ENCODE measurements at regions of chr2 and their contacts with region 1.

Region 1: GRCh38 chr2:71068218-71069035 is at the start of gene NAGK:
- DNase-seq: peak; percentile 97 to 99
- ATAC-seq: peak; percentile 96 to 97 (median 97)
- H3K4me3 ChIP-seq: peak within 1 kb of the TSS; percentile 78
- H3K27ac ChIP-seq: peak within 1 kb of the TSS; percentile 95
- H3K4me1 ChIP-seq: peaks cover 21% of the 10 kb centered on the region
- H3K27me3 ChIP-seq: no peaks in the 10 kb centered on the region
- CTCF ChIP-seq: no peak
- total RNA-seq, gene NAGK: 31.3 to 49.1 (median 37.0) TPM

Region 2: GRCh38 chr2:69625078-69625795 is 1443.2 kb before region 1 on chr2:
- intact Hi-C with region 1: no loop called
- DNase-seq: no peak
- ATAC-seq: peak in 3 of 4 donors; percentile 42 to 74 (median 70)
- H3K4me3 ChIP-seq: peak overlapping the region; percentile 1
- H3K27ac ChIP-seq: peak overlapping the region; percentile 11
- H3K4me1 ChIP-seq: peaks cover 38% of the 10 kb centered on the region
- H3K27me3 ChIP-seq: no peaks in the 10 kb centered on the region
- CTCF ChIP-seq: no peak

Region 3: GRCh38 chr2:71130113-71130904 is 61.9 kb after region 1 on chr2 and contains the starts of genes MCEE and MPHOSPH10:
- intact Hi-C with region 1: loop called (anchors 5 kb)
- DNase-seq: peak; percentile 90 to 95
- ATAC-seq: peak; percentile 95 to 97 (median 96)
- H3K4me3 ChIP-seq: peak within 1 kb of the TSS; percentile 95
- H3K27ac ChIP-seq: peak within 1 kb of the TSS; percentile 93
- H3K4me1 ChIP-seq: peaks cover 28% of the 10 kb centered on the region
- H3K27me3 ChIP-seq: no peaks in the 10 kb centered on the region
- CTCF ChIP-seq: no peak
- total RNA-seq, gene MCEE: 15.3 to 17.2 (median 15.9) TPM
- total RNA-seq, gene MPHOSPH10: 32.9 to 53.7 (median 39.5) TPM

Region 4: DNA sequence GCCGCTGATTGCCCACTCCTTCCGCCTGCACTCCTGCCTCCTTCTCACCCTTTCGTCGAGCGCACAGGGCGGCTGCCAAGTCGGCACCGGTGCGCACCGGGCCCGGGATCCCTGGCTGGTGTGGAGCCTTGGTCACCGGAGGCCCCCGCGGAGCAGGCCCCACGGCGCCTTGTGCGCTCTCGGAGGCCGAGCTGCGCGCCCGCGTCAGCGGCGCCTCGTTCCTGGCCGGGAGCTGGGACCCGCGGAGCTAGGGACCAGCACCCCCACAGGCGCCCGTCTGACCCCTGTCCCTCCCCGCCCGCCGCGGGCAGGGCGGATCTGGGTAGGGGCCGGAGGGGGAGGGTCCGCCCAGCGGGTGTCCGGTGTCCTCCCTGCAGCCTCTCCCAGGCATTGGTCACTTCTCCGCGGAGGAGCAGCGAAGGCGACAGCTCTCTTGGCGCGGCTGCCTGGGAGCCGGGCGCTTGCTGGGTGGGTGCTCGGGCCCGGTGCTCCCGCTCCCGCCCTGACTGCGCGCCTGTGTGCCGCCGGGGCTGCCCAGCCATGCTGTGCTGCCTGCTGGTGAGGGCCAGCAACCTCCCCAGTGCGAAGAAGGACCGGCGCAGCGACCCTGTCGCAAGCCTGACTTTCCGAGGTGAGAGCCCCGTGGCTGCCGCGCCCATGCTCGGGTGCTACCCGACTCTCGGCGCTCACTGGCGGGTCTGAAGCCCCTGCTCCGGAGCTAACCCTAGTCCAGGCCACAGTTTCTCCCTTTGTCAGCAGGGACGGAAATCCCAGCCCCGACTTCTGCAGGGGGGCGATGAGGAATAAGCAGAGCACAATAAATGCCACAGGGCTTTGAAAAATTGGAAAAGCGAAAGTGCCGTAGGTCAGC is 398.1 kb after region 1 on chr2:
- intact Hi-C with region 1: no loop called
- DNase-seq: peak; percentile 60 to 86
- ATAC-seq: peak; percentile 63 to 79 (median 76)
- H3K4me3 ChIP-seq: peak overlapping the region; percentile 75
- H3K27ac ChIP-seq: peak overlapping the region; percentile 90
- H3K4me1 ChIP-seq: peaks cover 89% of the 10 kb centered on the region
- H3K27me3 ChIP-seq: no peaks in the 10 kb centered on the region
- CTCF ChIP-seq: no peak